ENCODE measurements at regions of chr6 and their contacts with region 1.

Region 1: GRCh38 chr6:159693128-159693893 is at the start of gene SOD2:
- DNase-seq: peak; percentile 75 to 92 (median 85)
- ATAC-seq: peak; percentile 84
- H3K4me3 ChIP-seq: peak within 1 kb of the TSS; percentile 63
- H3K4me3 Mint-ChIP-seq: peak within 1 kb of the TSS; percentile 74 to 97 (median 94)
- H3K27ac ChIP-seq: peak within 1 kb of the TSS; percentile 90
- H3K27ac Mint-ChIP-seq: peak within 1 kb of the TSS; percentile 94 to 98 (median 97)
- H3K4me1 ChIP-seq: peaks cover 18 to 31% of the 10 kb centered on the region in 2 donors
- H3K4me1 Mint-ChIP-seq: peaks cover 31 to 62% (median 44%) of the 10 kb centered on the region in 7 donors
- H3K27me3 ChIP-seq: no peaks in the 10 kb centered on the region
- H3K27me3 Mint-ChIP-seq: no peaks in the 10 kb centered on the region
- total RNA-seq, gene SOD2: 80.2 to 306 (median 105) TPM

Region 2: GRCh38 chr6:158819213-158819909 is 874.0 kb before region 1 on chr6 and contains the start of gene EZR:
- CTCF ChIA-PET with region 1: no interaction called
- POLR2A ChIA-PET with region 1: no interaction called
- intact Hi-C with region 1: loop called in 1 of 2 experiments (anchors 5 kb)
- DNase-seq: peak; percentile 70 to 85 (median 80)
- ATAC-seq: peak; percentile 80
- H3K4me3 ChIP-seq: peak within 1 kb of the TSS; percentile 50
- H3K4me3 Mint-ChIP-seq: peak within 1 kb of the TSS; percentile 81 to 97 (median 90)
- H3K27ac ChIP-seq: peak within 1 kb of the TSS; percentile 99
- H3K27ac Mint-ChIP-seq: peak within 1 kb of the TSS; percentile 89 to 97 (median 91)
- H3K4me1 ChIP-seq: peaks cover 21 to 24% of the 10 kb centered on the region in 2 donors
- H3K4me1 Mint-ChIP-seq: peaks cover 30 to 47% (median 36%) of the 10 kb centered on the region in 7 donors
- H3K27me3 ChIP-seq: no peaks in the 10 kb centered on the region
- H3K27me3 Mint-ChIP-seq: no peaks in the 10 kb centered on the region
- total RNA-seq, gene EZR: 132 to 201 (median 163) TPM

Region 3: GRCh38 chr6:159726918-159727716 is 33.8 kb after region 1 on chr6 and contains the start of gene WTAP:
- CTCF ChIA-PET with region 1: interaction called, 6 read pairs
- POLR2A ChIA-PET with region 1: interaction called, 115 read pairs
- intact Hi-C with region 1: loop called (anchors 1 kb)
- DNase-seq: peak; percentile 83 to 97 (median 97)
- ATAC-seq: peak; percentile 93
- H3K4me3 ChIP-seq: peak within 1 kb of the TSS; percentile 89
- H3K4me3 Mint-ChIP-seq: peak within 1 kb of the TSS; percentile 87 to 97 (median 95)
- H3K27ac ChIP-seq: peak within 1 kb of the TSS; percentile 91
- H3K27ac Mint-ChIP-seq: peak within 1 kb of the TSS; percentile 95 to 100 (median 99)
- H3K4me1 ChIP-seq: peaks cover 33 to 34% of the 10 kb centered on the region in 2 donors
- H3K4me1 Mint-ChIP-seq: peaks cover 34 to 79% (median 67%) of the 10 kb centered on the region in 7 donors
- H3K27me3 ChIP-seq: no peaks in the 10 kb centered on the region
- H3K27me3 Mint-ChIP-seq: peaks cover 0 to 6% (median 0%) of the 10 kb centered on the region in 5 donors
- total RNA-seq, gene WTAP: 117 to 152 (median 141) TPM

Region 4: GRCh38 chr6:159852877-159853276 is 159.6 kb after region 1 on chr6:
- CTCF ChIA-PET with region 1: interaction called, 12 read pairs
- POLR2A ChIA-PET with region 1: interaction called, 3 read pairs
- intact Hi-C with region 1: loop called (anchors 1 kb)
- DNase-seq: peak in 6 of 9 donors; percentile 12 to 59 (median 41)
- ATAC-seq: peak; percentile 37
- H3K4me3 ChIP-seq: no peak overlapping the region
- H3K4me3 Mint-ChIP-seq: no peak overlapping the region
- H3K27ac ChIP-seq: no peak overlapping the region
- H3K27ac Mint-ChIP-seq: peak overlapping the region in 1 of 9 donors; percentile 38
- H3K4me1 ChIP-seq: no peaks in the 10 kb centered on the region
- H3K4me1 Mint-ChIP-seq: peaks cover 0 to 6% (median 0%) of the 10 kb centered on the region in 7 donors
- H3K27me3 ChIP-seq: no peaks in the 10 kb centered on the region
- H3K27me3 Mint-ChIP-seq: peaks cover 0 to 37% (median 0%) of the 10 kb centered on the region in 5 donors

Region 5: GRCh38 chr6:159979136-159979874 is 286.0 kb after region 1 on chr6:
- CTCF ChIA-PET with region 1: interaction called, 3 read pairs
- POLR2A ChIA-PET with region 1: interaction called, 3 read pairs
- intact Hi-C with region 1: loop called in 1 of 2 experiments (anchors 5 kb)
- DNase-seq: peak in 1 of 9 donors; percentile 51
- ATAC-seq: peak; percentile 64
- H3K4me3 ChIP-seq: no peak overlapping the region
- H3K4me3 Mint-ChIP-seq: peak overlapping the region; percentile 8 to 82 (median 39)
- H3K27ac ChIP-seq: no peak overlapping the region
- H3K27ac Mint-ChIP-seq: peak overlapping the region; percentile 60 to 96 (median 86)
- H3K4me1 ChIP-seq: peaks cover 54 to 79% of the 10 kb centered on the region in 2 donors
- H3K4me1 Mint-ChIP-seq: peaks cover 78 to 99% (median 96%) of the 10 kb centered on the region in 7 donors
- H3K27me3 ChIP-seq: no peaks in the 10 kb centered on the region
- H3K27me3 Mint-ChIP-seq: no peaks in the 10 kb centered on the region

Region 6: DNA sequence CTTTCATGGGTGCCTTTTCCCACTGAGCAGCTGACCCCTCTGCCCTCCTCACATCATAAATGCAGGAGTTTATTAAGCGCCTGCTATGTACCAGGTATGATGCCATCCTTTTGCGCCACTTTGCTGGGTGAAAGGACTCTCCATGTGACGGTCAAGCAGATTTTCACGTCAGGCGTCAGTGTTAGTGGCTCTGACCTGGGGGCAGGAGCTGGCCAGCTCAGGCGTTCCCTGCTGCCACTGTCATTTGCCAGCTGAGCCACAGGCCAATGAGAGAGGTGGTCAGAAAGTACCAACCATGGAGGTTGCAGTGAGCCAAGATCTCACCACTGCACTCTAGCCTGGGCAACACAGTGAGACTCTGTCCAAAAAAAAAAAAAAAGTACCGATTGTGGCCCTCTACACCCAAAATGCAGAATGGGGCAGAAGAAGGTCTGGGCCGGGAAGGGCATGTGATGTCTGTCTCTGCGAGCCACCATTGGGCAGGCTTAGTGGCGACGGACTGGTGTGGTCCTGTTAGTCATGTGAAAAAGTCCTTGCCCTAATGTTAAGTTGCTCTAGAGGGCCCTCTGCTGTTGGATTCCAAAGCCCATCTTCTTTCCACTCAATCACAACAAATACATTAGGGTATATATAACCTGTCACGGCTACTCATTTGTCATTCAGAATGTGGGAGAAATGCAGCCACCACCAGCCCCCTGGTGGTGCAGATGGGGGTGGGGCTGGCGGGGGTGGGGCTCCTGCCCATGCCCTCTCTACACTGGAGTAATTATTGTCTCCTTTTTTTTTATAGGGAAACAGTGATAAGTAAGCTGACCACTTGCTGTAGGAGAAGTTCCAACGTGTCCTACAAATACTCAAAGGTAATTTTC is 409.9 kb after region 1 on chr6:
- CTCF ChIA-PET with region 1: no interaction called
- POLR2A ChIA-PET with region 1: no interaction called
- intact Hi-C with region 1: loop called in 1 of 2 experiments (anchors 1 kb)
- DNase-seq: peak in 2 of 9 donors; percentile 5 to 20
- ATAC-seq: peak; percentile 55
- H3K4me3 ChIP-seq: no peak overlapping the region
- H3K4me3 Mint-ChIP-seq: no peak overlapping the region
- H3K27ac ChIP-seq: no peak overlapping the region
- H3K27ac Mint-ChIP-seq: peak overlapping the region in 2 of 9 donors; percentile 12 to 19
- H3K4me1 ChIP-seq: no peaks in the 10 kb centered on the region
- H3K4me1 Mint-ChIP-seq: peaks cover 4 to 34% (median 22%) of the 10 kb centered on the region in 7 donors
- H3K27me3 ChIP-seq: no peaks in the 10 kb centered on the region
- H3K27me3 Mint-ChIP-seq: no peaks in the 10 kb centered on the region

Region 7: DNA sequence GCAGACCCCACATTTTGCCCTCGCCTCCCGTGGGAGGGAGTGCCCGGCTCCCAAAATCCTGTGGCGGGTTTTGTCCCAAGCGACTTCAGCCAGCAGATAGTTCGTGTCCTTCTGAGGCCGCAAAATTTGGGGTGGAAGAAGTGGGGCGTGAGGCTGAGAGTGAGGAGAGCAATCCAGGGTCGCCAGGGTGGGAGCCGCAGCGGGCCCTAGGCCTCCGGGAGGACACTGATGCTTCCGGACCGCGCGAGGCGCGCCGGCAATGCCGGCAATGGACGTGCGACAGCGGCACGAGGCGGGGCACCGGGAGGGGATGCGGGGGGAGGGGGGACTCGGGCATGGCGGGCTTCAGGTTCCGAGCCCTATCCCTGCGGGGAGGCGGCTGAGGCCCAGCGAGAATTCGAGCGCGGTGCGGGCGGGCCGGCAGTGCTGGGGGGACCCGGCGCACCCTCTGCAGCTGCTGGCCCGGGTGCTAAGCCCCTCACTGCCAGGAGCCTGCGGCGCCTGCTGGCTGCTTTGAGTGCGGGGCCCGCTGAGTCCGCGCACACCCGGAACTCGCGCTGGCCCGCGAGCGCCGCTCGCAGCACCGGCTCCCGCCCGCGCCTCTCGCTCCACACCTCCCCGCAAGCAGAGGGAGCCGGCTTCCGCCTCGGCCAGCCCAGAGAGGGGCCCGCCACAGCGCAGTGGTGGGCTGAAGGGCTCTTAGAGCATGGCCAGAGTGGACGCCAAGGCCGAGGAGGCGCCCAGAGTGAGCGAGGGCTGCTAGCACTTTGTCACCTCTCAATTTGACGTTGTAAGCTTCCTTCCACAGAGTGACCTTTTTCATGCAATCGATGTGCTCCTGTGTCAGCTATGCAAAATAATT is 827.0 kb after region 1 on chr6:
- CTCF ChIA-PET with region 1: interaction called, 4 read pairs
- POLR2A ChIA-PET with region 1: no interaction called
- intact Hi-C with region 1: loop called (anchors 2 to 5 kb)
- DNase-seq: peak; percentile 47 to 81 (median 69)
- ATAC-seq: peak; percentile 82
- H3K4me3 ChIP-seq: peak overlapping the region; percentile 75
- H3K4me3 Mint-ChIP-seq: peak overlapping the region; percentile 91 to 97 (median 95)
- H3K27ac ChIP-seq: peak overlapping the region; percentile 70
- H3K27ac Mint-ChIP-seq: peak overlapping the region; percentile 81 to 96 (median 87)
- H3K4me1 ChIP-seq: peaks cover 0 to 14% of the 10 kb centered on the region in 2 donors
- H3K4me1 Mint-ChIP-seq: peaks cover 13 to 32% (median 24%) of the 10 kb centered on the region in 7 donors
- H3K27me3 ChIP-seq: no peaks in the 10 kb centered on the region
- H3K27me3 Mint-ChIP-seq: peaks cover 0 to 59% (median 0%) of the 10 kb centered on the region in 5 donors